A549 (cell line): ENCODE measurements at regions of chr2 and their contacts with region 1.

Region 1: DNA sequence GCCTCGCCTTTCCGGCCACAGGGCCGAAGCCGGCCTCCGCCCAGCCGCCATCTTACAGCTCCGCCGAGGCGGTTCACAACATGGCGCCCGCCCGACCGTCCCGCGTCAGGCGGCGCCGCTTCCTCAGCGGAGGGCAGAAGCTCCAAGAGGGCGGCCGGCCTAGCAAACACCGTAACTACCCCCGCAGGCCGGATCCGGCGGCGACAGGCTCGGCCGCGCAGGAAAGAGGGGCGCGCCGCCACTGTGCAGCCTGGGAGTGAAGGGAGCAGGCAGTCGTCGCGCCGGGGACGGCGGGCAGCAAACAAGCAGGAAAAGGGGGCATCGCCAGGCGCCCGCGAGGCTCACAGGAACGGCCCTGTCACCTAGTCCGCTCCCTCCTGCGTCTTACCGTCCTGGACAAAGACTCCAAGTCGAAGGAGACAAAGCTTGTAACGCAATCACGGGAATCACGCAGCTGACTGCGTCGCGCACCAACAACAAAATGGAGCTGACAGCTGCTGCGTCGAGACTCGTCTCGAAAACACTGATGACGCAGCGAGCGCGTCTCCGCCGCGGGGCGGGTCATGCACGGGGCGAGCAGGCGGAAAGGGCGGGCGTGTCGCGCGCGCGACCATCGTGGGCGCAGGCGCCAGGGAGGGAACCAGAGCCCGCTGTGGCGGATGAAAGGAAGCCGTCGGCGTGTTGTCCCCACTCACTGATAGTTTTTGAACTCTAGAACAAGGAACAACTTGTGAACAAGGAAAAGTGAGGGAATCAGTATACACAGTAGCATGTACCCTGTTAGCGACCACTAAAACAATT is at the start of gene CLK1:
- DNase-seq: peak; percentile 80 to 92
- ATAC-seq: peak; percentile 90
- H3K4me3 ChIP-seq: peak within 1 kb of the TSS; percentile 77
- H3K27ac ChIP-seq: peak within 1 kb of the TSS; percentile 91 to 97
- H3K4me1 ChIP-seq: peaks cover 38% of the 10 kb centered on the region
- CTCF ChIP-seq: no peak
- EP300 ChIP-seq: no peak
- POLR2A ChIP-seq: peak; percentile 93
- RAD21 ChIP-seq: no peak
- polyA plus RNA-seq, gene CLK1: 85.4 and 88.3 TPM in 2 replicates

Region 2: DNA sequence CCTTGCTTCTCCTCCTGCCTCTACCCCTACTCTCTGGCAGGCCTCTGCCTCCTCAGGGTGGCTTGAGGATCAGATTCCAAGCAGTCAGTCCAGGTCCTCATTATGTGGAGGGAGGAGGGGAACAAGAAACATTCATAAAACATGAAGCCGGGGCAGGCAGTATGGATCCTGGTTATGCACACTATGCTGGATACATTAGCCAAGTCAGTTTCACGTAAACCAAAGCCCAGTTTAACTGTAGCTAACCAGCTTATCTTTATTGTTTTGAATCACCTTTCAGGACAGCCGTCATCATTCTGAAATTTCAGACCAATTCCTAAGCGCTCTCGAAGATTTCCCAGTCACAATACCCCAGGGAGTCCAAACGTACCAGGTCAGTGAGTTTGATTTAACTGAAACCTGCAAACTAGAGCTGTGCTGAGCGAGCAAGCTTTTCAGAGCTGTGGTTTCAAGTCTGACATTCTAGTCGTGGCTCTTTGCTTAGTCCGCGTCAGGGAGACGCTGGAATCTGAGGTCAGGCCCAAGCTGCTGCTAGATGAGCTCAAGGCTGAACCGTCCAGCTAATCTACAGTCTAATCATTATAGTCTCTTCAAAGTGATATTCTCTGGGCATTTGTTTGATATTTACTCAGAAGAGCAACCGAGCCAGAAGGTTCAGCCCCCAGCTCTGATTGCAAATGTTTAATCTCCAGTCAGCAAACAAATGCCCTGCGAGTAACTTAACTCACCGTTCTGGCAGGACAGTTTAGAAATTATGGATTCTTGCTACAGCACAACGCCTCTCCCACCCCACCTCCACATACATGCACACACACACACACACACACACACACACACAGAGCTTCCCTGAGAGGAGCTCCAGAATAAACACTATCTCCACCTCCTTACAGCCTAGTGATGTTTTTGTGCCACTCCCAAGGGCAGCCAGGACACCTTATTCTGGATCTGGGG is 116.4 kb before region 1 on chr2:
- CTCF ChIA-PET with region 1: no interaction called
- POLR2A ChIA-PET with region 1: interaction called, 17 read pairs
- DNase-seq: peak; percentile 37 to 94
- ATAC-seq: peak; percentile 80 to 93
- H3K4me3 ChIP-seq: no peak overlapping the region
- H3K27ac ChIP-seq: peak overlapping the region; percentile 85 to 88
- H3K4me1 ChIP-seq: peaks cover 40% of the 10 kb centered on the region
- CTCF ChIP-seq: no peak
- EP300 ChIP-seq: peak; percentile 64 to 78; a peak in 2 of 5 replicates
- POLR2A ChIP-seq: no peak
- RAD21 ChIP-seq: peak; percentile 20 to 46; a peak in 4 of 5 replicates

Region 3: GRCh38 chr2:200756618-200757321 is 107.6 kb before region 1 on chr2:
- CTCF ChIA-PET with region 1: no interaction called
- POLR2A ChIA-PET with region 1: interaction called, 10 read pairs
- DNase-seq: peak; percentile 77 to 89
- ATAC-seq: peak; percentile 94
- H3K4me3 ChIP-seq: no peak overlapping the region
- H3K27ac ChIP-seq: peak overlapping the region; percentile 82 to 85
- H3K4me1 ChIP-seq: peaks cover 77% of the 10 kb centered on the region
- CTCF ChIP-seq: no peak
- EP300 ChIP-seq: no peak
- POLR2A ChIP-seq: no peak
- RAD21 ChIP-seq: 0 out of 5 replicates have a peak, but pooled peaks of 1 of the 2 experiments have one; percentile 2

Region 4: GRCh38 chr2:200765139-200765951 is 99.0 kb before region 1 on chr2:
- CTCF ChIA-PET with region 1: no interaction called
- POLR2A ChIA-PET with region 1: interaction called, 20 read pairs
- DNase-seq: peak; percentile 55 to 90
- ATAC-seq: peak; percentile 86 to 89
- H3K4me3 ChIP-seq: no peak overlapping the region
- H3K27ac ChIP-seq: peak overlapping the region; percentile 85 to 88
- H3K4me1 ChIP-seq: peaks cover 60% of the 10 kb centered on the region
- CTCF ChIP-seq: no peak
- EP300 ChIP-seq: peak; percentile 53 to 77; a peak in 3 of 5 replicates
- POLR2A ChIP-seq: no peak
- RAD21 ChIP-seq: peak; percentile 11 to 50; a peak in 3 of 5 replicates

Region 5: DNA sequence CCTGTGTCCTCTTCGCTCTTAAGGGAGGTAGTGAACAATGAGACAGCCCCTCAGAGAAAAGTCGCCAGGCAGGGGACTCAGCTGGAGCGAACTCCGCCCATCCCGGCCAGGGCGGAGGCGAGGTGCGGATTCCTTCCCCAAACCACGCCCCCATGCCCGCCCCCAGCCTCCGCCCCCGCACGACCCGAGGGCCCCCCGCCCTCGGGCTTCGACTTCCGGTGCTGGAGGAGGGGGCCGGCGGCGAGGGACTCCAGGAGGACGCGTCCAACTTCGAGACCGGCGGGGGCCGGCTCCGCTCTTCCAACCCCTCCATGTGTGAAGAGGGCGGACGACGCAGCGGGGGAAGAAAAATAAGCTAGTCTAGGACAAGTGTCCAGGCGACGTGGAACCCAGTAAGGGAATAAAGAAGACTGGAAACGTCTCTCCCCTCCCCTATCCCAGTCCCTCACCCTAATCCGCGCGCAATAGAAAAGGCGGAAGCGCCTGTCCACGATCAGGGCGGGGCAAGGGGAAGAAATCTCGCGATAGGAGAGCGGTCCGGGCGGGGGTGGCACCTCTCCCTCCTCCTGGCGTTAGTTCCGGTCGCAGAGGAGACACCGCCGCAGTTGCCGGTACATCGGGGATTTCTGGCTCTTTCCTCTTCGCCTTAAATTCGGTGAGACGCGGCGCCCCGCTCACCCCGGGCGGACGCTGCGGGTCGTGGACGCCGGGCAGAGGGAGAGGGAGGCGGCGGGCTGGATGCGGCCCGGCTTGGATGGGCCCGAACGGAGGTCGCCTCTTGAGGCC is 52.8 kb before region 1 on chr2 and contains the start of gene BZW1:
- CTCF ChIA-PET with region 1: interaction called, 4 read pairs
- POLR2A ChIA-PET with region 1: interaction called, 15 read pairs
- DNase-seq: peak; percentile 85 to 97
- ATAC-seq: peak; percentile 82 to 90
- H3K4me3 ChIP-seq: peak within 1 kb of the TSS; percentile 97
- H3K27ac ChIP-seq: peak within 1 kb of the TSS; percentile 96 to 99
- H3K4me1 ChIP-seq: peaks cover 45% of the 10 kb centered on the region
- CTCF ChIP-seq: no peak
- EP300 ChIP-seq: no peak
- POLR2A ChIP-seq: peak; percentile 46
- RAD21 ChIP-seq: 0 out of 5 replicates have a peak, but pooled peaks of 1 of the 2 experiments have one; percentile 2
- polyA plus RNA-seq, gene BZW1: 439 and 494 TPM in 2 replicates

Region 6: GRCh38 chr2:200850512-200851256 is 13.7 kb before region 1 on chr2:
- CTCF ChIA-PET with region 1: interaction called, 4 read pairs
- POLR2A ChIA-PET with region 1: interaction called, 15 read pairs
- DNase-seq: no peak
- ATAC-seq: peak in 1 of 2 experiments; percentile 6; a peak in 2 of 6 replicates
- H3K4me3 ChIP-seq: no peak overlapping the region
- H3K27ac ChIP-seq: no peak overlapping the region
- H3K4me1 ChIP-seq: no peaks in the 10 kb centered on the region
- CTCF ChIP-seq: no peak
- EP300 ChIP-seq: no peak
- POLR2A ChIP-seq: no peak
- RAD21 ChIP-seq: no peak

Region 7: DNA sequence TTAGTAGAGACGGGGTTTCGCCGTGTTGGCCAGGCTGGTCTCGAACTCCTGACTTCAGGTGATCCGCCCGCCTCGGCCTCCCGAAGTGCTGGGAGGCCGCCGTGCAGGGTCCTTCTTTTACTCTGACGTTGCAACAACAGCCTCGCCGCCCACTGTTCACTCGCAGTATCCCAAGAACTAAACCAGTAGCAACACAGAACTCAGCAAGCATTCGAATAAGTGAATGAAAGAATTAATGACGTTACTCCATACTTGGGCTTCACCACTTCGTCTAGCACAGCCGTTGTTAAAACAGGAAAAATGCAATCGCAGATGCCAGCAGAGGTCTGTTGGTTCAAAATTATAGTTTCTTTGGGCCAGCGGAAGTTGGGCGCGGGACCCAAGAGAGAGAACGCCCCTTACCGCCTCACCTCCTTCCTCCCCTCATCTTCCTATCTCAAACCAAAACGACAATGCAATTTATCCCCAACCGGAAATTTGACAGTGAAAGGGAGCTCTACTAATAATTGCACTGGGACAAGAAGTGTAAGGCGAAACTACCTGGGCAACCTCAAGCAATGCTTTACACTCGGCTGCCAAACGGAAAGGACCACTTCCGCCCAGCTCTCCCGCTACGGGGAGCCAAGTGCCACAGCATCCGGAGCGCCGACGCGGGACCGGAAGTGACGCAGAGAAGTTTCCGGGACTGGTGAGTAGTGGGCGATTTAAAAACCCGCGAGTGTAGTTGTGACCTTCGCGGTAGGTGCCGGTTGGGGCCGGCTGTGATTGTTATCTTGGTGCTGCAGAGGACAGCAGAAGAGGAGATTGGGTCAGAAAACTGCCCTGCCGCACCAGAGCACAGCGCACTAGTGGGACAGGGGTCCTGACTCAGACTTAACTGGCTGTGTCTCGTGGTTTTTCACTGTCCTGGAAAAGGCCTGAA is 24.6 kb after region 1 on chr2 and contains the starts of genes NIF3L1 and PPIL3:
- CTCF ChIA-PET with region 1: interaction called, 4 read pairs
- POLR2A ChIA-PET with region 1: interaction called, 27 read pairs
- DNase-seq: peak; percentile 86 to 99
- ATAC-seq: peak; percentile 94 to 95
- H3K4me3 ChIP-seq: peak within 1 kb of the TSS; percentile 75
- H3K27ac ChIP-seq: peak within 1 kb of the TSS; percentile 89 to 93
- H3K4me1 ChIP-seq: peaks cover 12% of the 10 kb centered on the region; the same call in 2 of the 3 replicates
- CTCF ChIP-seq: no peak
- EP300 ChIP-seq: no peak
- POLR2A ChIP-seq: peak; percentile 26
- RAD21 ChIP-seq: no peak; a peak in 1 of 5 replicates
- polyA plus RNA-seq, gene NIF3L1: 103 and 127 TPM in 2 replicates
- polyA plus RNA-seq, gene PPIL3: 62.6 and 75.6 TPM in 2 replicates

Region 8: GRCh38 chr2:200959301-200959700 is 94.9 kb after region 1 on chr2:
- CTCF ChIA-PET with region 1: no interaction called
- POLR2A ChIA-PET with region 1: no interaction called
- DNase-seq: no peak
- ATAC-seq: no peak
- H3K4me3 ChIP-seq: no peak overlapping the region
- H3K27ac ChIP-seq: no peak overlapping the region
- H3K4me1 ChIP-seq: peaks cover 13% of the 10 kb centered on the region
- CTCF ChIP-seq: no peak
- EP300 ChIP-seq: no peak
- POLR2A ChIP-seq: no peak
- RAD21 ChIP-seq: no peak